Dorsolateral prefrontal cortex (tissue), 120 donors: ENCODE measurements at regions of chr1 and their contacts with region 1.

Region 1: GRCh38 chr1:24201941-24202440 is 14.9 kb upstream of the IFNLR1 start:
- DNase-seq: peak in 9 of 10 donors; percentile 35 to 91 (median 73)
- H3K4me3 ChIP-seq: no peak overlapping the region
- H3K27ac ChIP-seq: peak overlapping the region in 16 of 59 donors; percentile 1 to 73 (median 44)
- H3K27me3 ChIP-seq: no peaks in the 10 kb centered on the region
- CTCF ChIP-seq: peak; percentile 70 to 95 (median 82)

Region 2: DNA sequence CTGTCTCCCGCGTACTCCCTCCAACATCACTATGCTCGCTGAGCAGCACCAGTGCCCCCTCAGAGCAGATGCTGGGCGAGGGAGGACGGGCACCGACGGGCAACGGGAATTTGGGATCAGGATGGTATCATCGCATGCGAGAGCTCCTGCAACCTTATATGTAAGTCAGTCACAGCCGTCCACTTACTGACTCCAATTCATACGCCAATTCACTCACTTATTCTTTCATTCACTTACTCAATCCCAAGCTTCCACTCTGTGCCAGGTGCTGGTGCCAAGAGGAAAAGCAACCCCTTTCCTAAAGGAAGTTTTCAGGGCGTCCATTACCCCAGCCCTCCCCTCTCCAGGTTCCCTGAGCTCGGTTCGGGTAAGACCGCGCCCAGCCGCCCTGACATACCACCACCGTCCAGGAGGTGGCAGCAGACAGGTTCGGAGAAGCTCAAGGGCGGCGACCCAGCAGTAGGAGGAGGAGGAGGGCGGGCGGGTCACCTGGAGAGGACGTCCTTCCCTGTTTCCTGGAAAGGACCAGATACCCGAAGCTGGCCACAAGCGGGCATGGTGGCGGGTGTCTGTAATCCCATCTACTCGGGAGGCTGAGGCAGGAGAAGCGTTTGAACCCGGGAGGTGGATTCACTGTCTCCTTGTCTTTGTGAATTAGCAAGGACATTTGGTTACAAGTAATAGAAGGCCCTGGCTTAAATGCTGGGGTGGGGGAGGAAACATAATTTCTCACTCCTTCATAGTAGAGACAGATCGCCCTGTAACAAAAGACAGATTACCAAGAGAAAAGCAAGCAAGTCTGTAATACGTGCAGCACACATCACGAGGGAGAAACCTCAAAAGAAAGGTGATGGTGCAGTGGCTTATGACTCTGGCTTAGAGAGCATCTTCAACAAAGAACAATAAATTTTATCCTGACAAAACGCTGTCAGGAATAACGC is 51.5 kb before region 1 on chr1:
- intact Hi-C with region 1: no loop called
- DNase-seq: peak; percentile 69 to 93 (median 78)
- H3K4me3 ChIP-seq: peak overlapping the region in 35 of 59 donors; percentile 2 to 53 (median 28)
- H3K27ac ChIP-seq: no peak overlapping the region
- H3K27me3 ChIP-seq: peaks cover 0 to 31% (median 4%) of the 10 kb centered on the region in 45 donors
- CTCF ChIP-seq: peak; percentile 51 to 88 (median 78)

Region 3: GRCh38 chr1:24289937-24290595 is 88.1 kb after region 1 on chr1:
- intact Hi-C with region 1: loop called in 1 of 2 experiments (anchors 5 kb)
- DNase-seq: peak; percentile 35 to 92 (median 82)
- H3K4me3 ChIP-seq: no peak overlapping the region
- H3K27ac ChIP-seq: peak overlapping the region in 34 of 59 donors; percentile 2 to 91 (median 71)
- H3K27me3 ChIP-seq: peaks cover 0 to 5% (median 0%) of the 10 kb centered on the region in 45 donors
- CTCF ChIP-seq: peak in 1 of 56 donors; percentile 15

Region 4: DNA sequence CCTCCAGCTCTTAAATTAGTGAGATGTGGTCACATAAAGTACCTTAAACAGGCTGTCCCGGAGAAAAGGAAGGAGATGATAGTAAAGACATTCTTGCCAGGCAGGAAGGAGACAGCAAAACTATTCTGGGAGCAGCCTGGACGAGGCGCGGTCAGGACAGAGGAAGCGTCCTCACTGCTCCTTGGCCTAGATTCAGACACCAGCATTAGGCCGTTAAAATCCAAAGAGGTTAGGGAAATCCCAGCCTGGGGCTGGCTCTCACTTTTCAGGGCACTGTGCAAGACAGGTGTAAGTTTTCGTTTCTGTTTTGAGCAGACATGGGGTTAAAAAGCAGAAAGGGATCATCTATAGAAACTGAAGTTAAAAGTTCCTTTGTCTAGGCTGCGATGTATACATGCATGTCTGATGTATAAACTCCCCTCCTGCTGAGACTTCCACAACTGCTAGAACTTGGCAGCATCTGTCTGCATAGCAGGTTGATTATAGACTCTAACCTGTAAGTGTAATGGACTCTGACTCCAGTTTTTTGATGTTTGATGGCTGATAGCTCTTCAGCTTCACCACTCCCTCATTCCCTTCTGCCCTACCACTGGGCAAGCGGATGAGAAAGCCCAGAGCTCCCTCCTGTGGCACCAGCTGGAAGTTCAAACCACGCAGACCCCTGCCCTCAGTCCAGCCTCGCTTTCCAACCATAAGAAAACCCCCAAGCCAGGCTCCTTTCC is 190.1 kb after region 1 on chr1:
- intact Hi-C with region 1: loop called (anchors 1 to 2 kb)
- DNase-seq: peak in 8 of 10 donors; percentile 46 to 75 (median 60)
- H3K4me3 ChIP-seq: peak overlapping the region in 35 of 59 donors; percentile 0 to 49 (median 26)
- H3K27ac ChIP-seq: peak overlapping the region; percentile 28 to 93 (median 80)
- H3K27me3 ChIP-seq: no peaks in the 10 kb centered on the region
- CTCF ChIP-seq: peak; percentile 30 to 90 (median 78)

Region 5: DNA sequence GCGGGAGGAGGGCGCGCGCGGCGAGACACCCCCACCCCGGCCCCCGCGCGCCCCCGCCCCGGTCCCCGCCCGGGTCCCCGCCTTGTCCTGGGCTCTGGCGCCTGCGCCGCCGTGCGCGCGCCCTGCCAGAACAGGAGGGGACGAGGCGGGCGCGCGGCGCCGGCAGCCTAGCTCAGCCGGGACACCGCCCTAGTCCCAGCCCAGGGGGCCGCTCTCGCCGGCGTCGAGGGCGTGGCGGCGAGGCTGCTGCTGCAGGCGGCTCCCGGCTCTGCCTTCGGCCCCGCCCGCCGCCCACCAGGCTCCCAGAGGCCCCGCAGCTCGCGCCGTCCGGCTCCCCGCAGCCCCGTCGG is 300.7 kb after region 1 on chr1 and contains the start of gene RCAN3:
- intact Hi-C with region 1: loop called in 1 of 2 experiments (anchors 10 kb)
- DNase-seq: peak; percentile 55 to 81 (median 64)
- H3K4me3 ChIP-seq: peak within 1 kb of the TSS; percentile 39 to 84 (median 68)
- H3K27ac ChIP-seq: peak within 1 kb of the TSS in 54 of 59 donors; percentile 29 to 92 (median 79)
- H3K27me3 ChIP-seq: peaks cover 0 to 46% (median 7%) of the 10 kb centered on the region in 45 donors
- CTCF ChIP-seq: peak in 2 of 56 donors; percentile 17 to 24
- total RNA-seq, gene RCAN3: 2.3 to 12.6 (median 5.5) TPM